WTC11 (cell line): ENCODE measurements at regions of chr2 and their contacts with region 1.

Region 1: GRCh38 chr2:190679813-190680591 is 31.1 kb downstream of the NAB1 start:
- DNase-seq: peak; percentile 83
- ATAC-seq: peak; percentile 95
- H3K4me3 Mint-ChIP-seq: peak overlapping the region; percentile 38
- H3K27ac Mint-ChIP-seq: peak overlapping the region; percentile 50
- H3K4me1 Mint-ChIP-seq: peaks cover 63% of the 10 kb centered on the region
- H3K27me3 Mint-ChIP-seq: no peaks in the 10 kb centered on the region
- CTCF ChIP-seq: peak; percentile 58

Region 2: DNA sequence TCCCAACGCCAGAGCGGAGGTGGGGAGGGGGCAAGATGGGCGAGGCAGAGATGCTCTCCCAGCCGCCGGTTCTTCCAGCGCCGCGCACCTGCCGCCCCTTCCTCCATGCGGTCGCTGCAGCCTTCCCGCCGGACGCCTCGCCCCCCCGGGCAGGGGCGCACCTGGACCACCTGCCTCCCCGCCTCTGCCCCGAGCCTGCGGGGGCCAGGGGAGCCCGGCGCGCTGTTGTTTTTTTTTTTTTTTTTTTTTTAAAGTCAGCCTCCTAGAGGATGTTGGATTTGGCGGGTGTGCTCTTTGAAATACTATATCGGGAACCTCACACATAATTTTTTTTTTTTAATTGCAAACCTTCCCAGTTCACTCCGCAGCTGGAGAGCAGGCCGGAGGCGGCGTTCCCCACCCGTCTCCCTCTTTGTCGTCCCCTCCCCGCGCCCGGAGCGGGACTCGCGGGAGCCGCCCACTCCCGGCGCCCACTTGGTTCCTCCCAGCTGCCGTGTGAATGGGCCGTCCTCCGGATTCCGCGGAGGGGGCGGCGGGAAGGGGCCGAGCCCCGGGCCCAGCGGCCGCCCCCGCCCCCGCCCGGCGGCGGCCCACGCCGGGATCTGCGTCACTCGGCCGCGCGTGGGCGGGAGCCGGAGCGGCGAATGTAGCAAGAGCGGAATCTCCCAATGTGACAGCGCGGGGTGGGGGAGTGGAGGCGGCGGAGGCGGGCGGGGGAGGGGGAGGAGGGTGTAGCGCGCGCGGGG is 31.5 kb before region 1 on chr2:
- CTCF ChIA-PET with region 1: interaction called, 11 read pairs
- POLR2A ChIA-PET with region 1: no interaction called
- DNase-seq: peak; percentile 65
- ATAC-seq: peak; percentile 61
- H3K4me3 Mint-ChIP-seq: peak overlapping the region; percentile 79
- H3K27ac Mint-ChIP-seq: no peak overlapping the region
- H3K4me1 Mint-ChIP-seq: peaks cover 18% of the 10 kb centered on the region
- H3K27me3 Mint-ChIP-seq: peaks cover 18% of the 10 kb centered on the region
- CTCF ChIP-seq: no peak

Region 3: GRCh38 chr2:190664240-190664639 is 15.8 kb before region 1 on chr2:
- CTCF ChIA-PET with region 1: interaction called, 16 read pairs
- POLR2A ChIA-PET with region 1: no interaction called
- DNase-seq: no peak
- ATAC-seq: no peak
- H3K4me3 Mint-ChIP-seq: no peak overlapping the region
- H3K27ac Mint-ChIP-seq: no peak overlapping the region
- H3K4me1 Mint-ChIP-seq: peaks cover 4% of the 10 kb centered on the region
- H3K27me3 Mint-ChIP-seq: no peaks in the 10 kb centered on the region
- CTCF ChIP-seq: no peak

Region 4: GRCh38 chr2:190698895-190699294 is 18.9 kb after region 1 on chr2:
- CTCF ChIA-PET with region 1: interaction called, 41 read pairs
- POLR2A ChIA-PET with region 1: interaction called, 3 read pairs
- DNase-seq: peak; percentile 39
- ATAC-seq: peak; percentile 66
- H3K4me3 Mint-ChIP-seq: no peak overlapping the region
- H3K27ac Mint-ChIP-seq: peak overlapping the region; percentile 95
- H3K4me1 Mint-ChIP-seq: peaks cover 72% of the 10 kb centered on the region
- H3K27me3 Mint-ChIP-seq: no peaks in the 10 kb centered on the region
- CTCF ChIP-seq: no peak

Region 5: GRCh38 chr2:190763901-190764514 is 84.0 kb after region 1 on chr2:
- CTCF ChIA-PET with region 1: no interaction called
- POLR2A ChIA-PET with region 1: no interaction called
- DNase-seq: no peak
- ATAC-seq: no peak
- H3K4me3 Mint-ChIP-seq: no peak overlapping the region
- H3K27ac Mint-ChIP-seq: no peak overlapping the region
- H3K4me1 Mint-ChIP-seq: no peaks in the 10 kb centered on the region
- H3K27me3 Mint-ChIP-seq: no peaks in the 10 kb centered on the region
- CTCF ChIP-seq: no peak